Heart right ventricle (tissue), 16 donors: ENCODE measurements at regions of chr3 and their contacts with region 1.

Region 1: GRCh38 chr3:44612678-44613077 is 12.2 kb upstream of the ZNF197 start:
- DNase-seq: no peak
- ATAC-seq: no peak
- H3K4me3 ChIP-seq: no peak overlapping the region
- H3K27ac ChIP-seq: no peak overlapping the region
- H3K4me1 ChIP-seq: no peaks in the 10 kb centered on the region
- H3K27me3 ChIP-seq: no peaks in the 10 kb centered on the region
- CTCF ChIP-seq: no peak

Region 2: DNA sequence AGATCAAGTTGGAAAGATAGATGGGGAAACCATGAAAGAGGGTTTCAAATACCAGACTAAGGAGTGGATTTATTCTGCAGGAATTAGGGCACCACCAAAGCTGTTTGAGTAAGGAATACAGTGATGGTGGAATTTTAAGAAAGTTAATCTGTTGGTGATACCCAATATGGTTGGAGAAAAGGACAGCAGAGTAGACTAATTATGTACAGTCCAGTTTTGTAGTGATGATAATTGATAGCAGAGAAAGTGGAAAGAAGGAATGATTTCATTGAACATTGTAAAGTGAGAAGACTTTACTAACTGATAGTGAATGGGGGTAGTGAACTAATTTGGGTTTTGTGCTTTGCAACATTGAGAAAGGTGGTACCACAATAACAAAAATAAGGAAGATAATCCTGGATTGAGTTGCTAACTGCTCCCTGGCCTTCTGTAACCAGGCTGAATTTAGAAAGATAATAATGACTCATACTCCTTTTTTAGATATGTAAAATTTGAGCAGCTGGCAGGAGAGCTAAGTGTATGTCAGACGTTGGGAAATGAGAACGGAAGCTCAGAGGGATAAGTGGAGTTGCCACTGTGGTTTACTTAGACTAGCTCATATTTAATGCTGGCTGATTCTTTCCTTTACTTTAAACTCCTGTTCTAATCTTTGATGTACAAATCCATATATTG is 257.2 kb before region 1 on chr3:
- intact Hi-C with region 1: no loop called
- DNase-seq: peak in 1 of 2 donors; percentile 41
- ATAC-seq: peak; percentile 90 to 98 (median 96)
- H3K4me3 ChIP-seq: no peak overlapping the region
- H3K27ac ChIP-seq: peak overlapping the region in 9 of 10 donors; percentile 52 to 85 (median 77)
- H3K4me1 ChIP-seq: peaks cover 0 to 27% (median 18%) of the 10 kb centered on the region in 9 donors
- H3K27me3 ChIP-seq: no peaks in the 10 kb centered on the region
- CTCF ChIP-seq: no peak

Region 3: GRCh38 chr3:44584646-44585501 is 27.8 kb before region 1 on chr3 and contains the start of gene ZNF660:
- intact Hi-C with region 1: no loop called
- DNase-seq: peak; percentile 51 to 69
- ATAC-seq: peak; percentile 96 to 98 (median 97)
- H3K4me3 ChIP-seq: peak within 1 kb of the TSS; percentile 42 to 72 (median 64)
- H3K27ac ChIP-seq: peak within 1 kb of the TSS in 9 of 10 donors; percentile 23 to 78 (median 71)
- H3K4me1 ChIP-seq: peaks cover 0 to 20% (median 10%) of the 10 kb centered on the region in 9 donors
- H3K27me3 ChIP-seq: peaks cover 0 to 5% (median 0%) of the 10 kb centered on the region in 7 donors
- CTCF ChIP-seq: no peak
- total RNA-seq, gene ZNF660: 0.69 to 2.5 (median 1.3) TPM

Region 4: GRCh38 chr3:44659434-44659833 is 46.8 kb after region 1 on chr3:
- intact Hi-C with region 1: loop called in 1 of 10 experiments (anchors 5 kb)
- DNase-seq: no peak
- ATAC-seq: no peak
- H3K4me3 ChIP-seq: no peak overlapping the region
- H3K27ac ChIP-seq: no peak overlapping the region
- H3K4me1 ChIP-seq: peaks cover 0 to 7% (median 0%) of the 10 kb centered on the region in 9 donors
- H3K27me3 ChIP-seq: no peaks in the 10 kb centered on the region
- CTCF ChIP-seq: no peak

Region 5: DNA sequence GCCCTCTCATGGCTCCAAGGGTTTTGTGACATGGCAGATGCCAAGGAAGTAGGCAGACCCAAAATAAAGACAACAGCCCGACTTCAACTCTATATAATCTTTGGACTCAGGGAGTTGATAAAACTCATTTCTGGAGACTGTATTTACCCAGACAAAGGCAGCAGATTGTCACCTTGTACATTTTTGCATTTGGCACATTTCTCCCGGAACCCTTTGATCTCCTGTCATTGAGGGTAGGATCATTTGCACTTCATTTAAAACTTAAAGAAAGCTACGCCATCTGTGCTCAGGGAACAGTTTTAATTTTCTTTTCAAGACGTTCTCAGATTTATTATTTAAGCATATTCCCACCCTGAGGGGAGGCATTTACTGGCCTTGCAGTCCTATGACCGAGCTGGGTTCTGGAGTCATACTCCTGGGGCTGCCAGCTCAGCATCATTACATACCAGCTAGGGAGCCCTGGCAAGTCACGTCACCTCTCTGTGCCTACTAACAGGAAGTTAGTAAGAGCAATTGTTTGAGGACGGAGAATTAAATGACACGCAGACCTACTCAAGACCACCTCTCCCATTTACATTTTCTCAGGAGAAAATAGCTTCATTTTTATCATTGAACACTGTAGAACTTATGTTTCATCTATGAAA is 527.6 kb after region 1 on chr3:
- intact Hi-C with region 1: no loop called
- DNase-seq: no peak
- ATAC-seq: peak in 2 of 8 donors; percentile 30 to 53
- H3K4me3 ChIP-seq: no peak overlapping the region
- H3K27ac ChIP-seq: peak overlapping the region in 1 of 10 donors; percentile 78
- H3K4me1 ChIP-seq: peaks cover 0 to 54% (median 6%) of the 10 kb centered on the region in 9 donors
- H3K27me3 ChIP-seq: peaks cover 0 to 36% (median 22%) of the 10 kb centered on the region in 7 donors
- CTCF ChIP-seq: no peak